Activated CD4-positive, alpha-beta T cell treated with anti-CD3 and anti-CD28 coated beads, Interleukin-2, amount 10 ng/mL, durations not matched to agents 24 days and 14 days (primary cell): ENCODE measurements at regions of chr18 and their contacts with region 1.

Region 1: GRCh38 chr18:48030616-48031480 is 100.4 kb upstream of the SMAD2 start:
- DNase-seq: peak; percentile 68
- H3K4me3 Mint-ChIP-seq: no peak overlapping the region
- H3K27ac Mint-ChIP-seq: no peak overlapping the region
- H3K4me1 Mint-ChIP-seq: no peaks in the 10 kb centered on the region
- H3K27me3 Mint-ChIP-seq: peaks cover 3% of the 10 kb centered on the region

Region 2: DNA sequence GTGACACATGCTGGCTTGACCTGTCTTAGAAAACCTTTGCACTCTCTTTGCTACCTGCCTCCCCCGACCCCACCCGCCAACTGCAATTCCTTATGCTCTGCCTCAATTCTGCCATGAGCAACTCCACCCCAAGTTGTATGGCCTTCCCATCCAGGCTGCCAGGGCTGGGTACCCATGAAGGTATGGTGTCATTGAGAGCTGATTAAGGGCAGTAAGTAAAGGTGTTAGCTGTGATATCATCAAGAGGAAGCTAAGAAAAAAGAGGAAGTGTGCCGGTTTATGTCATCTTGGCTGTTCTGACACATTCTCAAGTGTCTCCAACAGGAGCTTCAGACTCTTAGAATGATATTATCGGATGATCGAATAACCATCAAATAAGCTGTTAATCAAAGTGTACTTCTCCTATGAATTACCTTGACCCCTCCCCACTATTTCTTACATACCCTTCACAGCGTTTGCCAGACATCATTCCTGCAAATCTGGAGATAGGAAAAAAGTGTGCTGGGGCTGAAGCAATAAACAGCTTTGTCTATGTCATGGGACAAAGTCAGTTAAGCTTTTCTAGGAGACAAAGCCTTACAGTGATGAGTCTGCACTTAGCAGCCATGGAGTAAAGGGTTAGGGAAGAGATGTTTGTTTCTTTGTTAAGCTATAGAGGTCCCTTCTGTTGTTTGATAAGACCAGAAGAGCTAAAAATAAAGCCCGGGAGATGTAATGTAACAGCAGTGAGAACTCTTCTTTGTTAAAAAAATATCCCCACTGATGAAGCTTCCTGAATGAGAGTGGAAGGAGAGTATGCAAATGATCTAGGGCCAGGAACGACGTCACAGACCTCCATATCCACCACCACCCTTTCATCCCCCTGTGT is 60.0 kb before region 1 on chr18:
- intact Hi-C with region 1: no loop called
- DNase-seq: no peak
- H3K4me3 Mint-ChIP-seq: no peak overlapping the region
- H3K27ac Mint-ChIP-seq: no peak overlapping the region
- H3K4me1 Mint-ChIP-seq: no peaks in the 10 kb centered on the region
- H3K27me3 Mint-ChIP-seq: peaks cover 23% of the 10 kb centered on the region

Region 3: DNA sequence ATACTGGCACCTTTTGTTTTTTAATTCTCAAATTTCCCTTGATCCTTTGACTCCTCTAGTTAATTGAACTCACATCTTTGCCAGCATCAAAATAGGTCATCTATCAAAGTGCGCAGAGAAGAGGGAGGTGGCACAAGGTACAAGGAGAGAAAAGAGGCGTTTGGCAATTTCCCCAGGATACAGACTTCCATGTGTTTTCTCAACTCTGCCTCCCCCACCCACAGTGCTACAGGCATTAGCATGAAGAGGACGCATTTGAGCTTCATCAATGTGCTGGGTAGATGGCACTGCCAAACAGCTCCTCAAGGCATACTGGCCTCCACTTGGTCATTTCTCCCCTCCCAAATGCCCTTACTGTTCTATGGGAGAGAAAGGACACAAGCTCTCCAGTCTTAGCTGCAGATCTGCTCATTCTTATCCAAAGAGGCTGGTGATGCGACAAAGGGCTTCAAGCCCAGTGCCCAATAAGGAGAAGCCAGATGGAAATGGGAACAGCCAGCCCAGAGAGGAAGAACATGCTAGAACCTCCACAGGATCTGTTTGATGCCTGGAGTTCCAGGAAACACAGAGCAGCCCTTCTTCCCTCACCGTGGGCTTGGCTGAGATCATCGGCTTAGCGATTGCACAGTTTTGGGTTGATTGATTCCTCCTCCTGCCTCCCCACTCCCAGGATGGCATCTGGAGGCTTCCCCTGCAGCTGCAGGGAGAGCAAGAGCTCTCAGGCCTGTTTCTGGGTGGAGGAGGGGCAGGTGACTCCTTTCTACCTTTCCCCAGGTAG is 44.3 kb after region 1 on chr18:
- intact Hi-C with region 1: no loop called
- DNase-seq: no peak
- H3K4me3 Mint-ChIP-seq: no peak overlapping the region
- H3K27ac Mint-ChIP-seq: no peak overlapping the region
- H3K4me1 Mint-ChIP-seq: no peaks in the 10 kb centered on the region
- H3K27me3 Mint-ChIP-seq: peaks cover 10% of the 10 kb centered on the region

Region 4: GRCh38 chr18:48317781-48318381 is 287.0 kb after region 1 on chr18:
- intact Hi-C with region 1: loop called (anchors 1 kb)
- DNase-seq: no peak
- H3K4me3 Mint-ChIP-seq: no peak overlapping the region
- H3K27ac Mint-ChIP-seq: no peak overlapping the region
- H3K4me1 Mint-ChIP-seq: no peaks in the 10 kb centered on the region
- H3K27me3 Mint-ChIP-seq: peaks cover 13% of the 10 kb centered on the region

Region 5: GRCh38 chr18:48345596-48345995 is 314.7 kb after region 1 on chr18:
- intact Hi-C with region 1: loop called (anchors 10 kb)
- DNase-seq: no peak
- H3K4me3 Mint-ChIP-seq: no peak overlapping the region
- H3K27ac Mint-ChIP-seq: no peak overlapping the region
- H3K4me1 Mint-ChIP-seq: no peaks in the 10 kb centered on the region
- H3K27me3 Mint-ChIP-seq: peaks cover 15% of the 10 kb centered on the region